ENCODE measurements at regions of chr5 and their contacts with region 1.

Region 1: GRCh38 chr5:147369742-147370374 is 135.0 kb downstream of the STK32A start:
- DNase-seq: no peak
- H3K4me3 ChIP-seq: no peak overlapping the region
- CTCF ChIP-seq: peak; percentile 22

Region 2: DNA sequence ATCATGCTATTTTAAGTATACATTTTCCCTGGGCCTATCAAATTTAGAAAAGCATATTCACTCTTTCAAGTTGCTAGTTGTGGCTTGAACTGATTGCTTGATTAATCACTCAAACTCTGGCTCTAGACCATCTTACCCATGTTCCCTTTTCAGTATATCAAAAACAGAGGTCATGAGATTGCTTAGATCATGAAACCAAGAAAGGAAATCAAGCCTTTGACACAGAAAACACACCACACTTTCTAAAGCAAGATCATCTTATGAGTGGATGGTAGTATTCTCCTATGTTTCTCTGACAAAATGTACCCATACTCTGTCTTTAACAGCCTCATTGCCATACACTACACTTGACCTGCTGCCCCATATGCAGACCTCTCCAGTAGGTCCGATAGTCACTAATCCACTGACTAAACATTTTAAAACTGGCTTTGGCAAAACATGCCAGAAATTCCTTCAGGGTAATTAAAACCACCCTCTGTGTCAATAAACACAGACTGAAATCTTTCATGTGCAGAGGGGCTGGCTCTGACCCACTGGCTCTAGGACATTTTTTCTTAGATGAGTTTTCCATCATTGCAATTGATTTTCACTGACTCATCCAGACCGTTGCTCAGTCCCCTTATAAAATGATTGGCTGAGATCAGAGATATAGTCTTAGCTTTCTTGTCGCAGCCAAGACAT is 509.5 kb before region 1 on chr5:
- CTCF ChIA-PET with region 1: no interaction called
- POLR2A ChIA-PET with region 1: no interaction called
- DNase-seq: peak; percentile 5
- H3K4me3 ChIP-seq: no peak overlapping the region
- CTCF ChIP-seq: no peak

Region 3: GRCh38 chr5:147098233-147098790 is 271.5 kb before region 1 on chr5:
- CTCF ChIA-PET with region 1: interaction called, 11 read pairs
- POLR2A ChIA-PET with region 1: no interaction called
- DNase-seq: no peak
- H3K4me3 ChIP-seq: no peak overlapping the region
- CTCF ChIP-seq: peak; percentile 24

Region 4: DNA sequence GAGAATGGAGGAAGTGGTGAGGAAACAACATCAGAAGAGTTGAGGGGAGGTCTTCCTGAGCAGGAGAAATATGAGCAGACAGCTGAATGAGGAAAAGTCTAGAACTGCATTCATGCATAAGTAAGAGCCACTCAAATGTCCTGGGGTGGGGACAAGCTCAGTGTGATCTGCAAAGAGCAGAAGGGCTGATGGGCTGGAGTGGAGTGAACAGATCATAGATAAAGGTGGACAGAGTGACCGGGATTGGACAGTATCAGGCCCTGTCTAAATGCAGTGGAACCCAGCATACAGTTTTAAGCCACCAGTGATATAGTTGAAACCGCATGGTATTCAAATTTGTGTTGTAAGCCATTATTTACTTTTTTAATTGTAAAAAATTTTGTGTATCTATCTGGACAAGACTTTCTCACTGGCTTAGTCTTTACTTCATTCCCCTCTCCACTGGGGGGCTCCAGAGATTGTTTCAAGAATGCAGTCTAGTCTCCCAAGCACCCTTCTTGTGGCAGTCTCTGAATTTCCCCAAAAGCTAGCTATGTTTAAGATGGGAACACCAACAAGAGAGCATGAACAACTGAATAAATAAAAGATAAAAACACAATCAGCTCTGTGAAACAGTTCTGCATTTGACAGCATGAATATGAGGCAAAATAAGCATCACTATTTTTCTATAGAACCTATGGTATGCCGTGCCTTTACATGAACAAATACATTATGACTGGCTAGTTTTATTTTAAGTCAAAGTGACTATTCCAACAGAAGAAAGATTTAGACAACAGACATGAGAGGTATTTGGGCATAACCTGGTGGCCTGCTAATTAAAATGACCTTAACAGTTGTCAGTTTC is 145.7 kb before region 1 on chr5:
- CTCF ChIA-PET with region 1: interaction called, 55 read pairs
- POLR2A ChIA-PET with region 1: no interaction called
- DNase-seq: peak; percentile 7
- H3K4me3 ChIP-seq: no peak overlapping the region
- CTCF ChIP-seq: peak; percentile 52

Region 5: GRCh38 chr5:147382776-147383175 is 12.9 kb after region 1 on chr5:
- CTCF ChIA-PET with region 1: interaction called, 13 read pairs
- POLR2A ChIA-PET with region 1: no interaction called
- DNase-seq: no peak
- H3K4me3 ChIP-seq: peak overlapping the region; percentile 60
- CTCF ChIP-seq: no peak

Region 6: GRCh38 chr5:147391781-147392180 is 21.9 kb after region 1 on chr5:
- CTCF ChIA-PET with region 1: interaction called, 12 read pairs
- POLR2A ChIA-PET with region 1: no interaction called
- DNase-seq: peak; percentile 21
- H3K4me3 ChIP-seq: no peak overlapping the region
- CTCF ChIP-seq: peak; percentile 67